ENCODE measurements at regions of chr5 and their contacts with region 1.

Region 1: GRCh38 chr5:55534436-55535198 is at the start of gene PLPP1:
- DNase-seq: peak; percentile 92 to 93
- ATAC-seq: peak; percentile 94 to 97 (median 96)
- H3K4me3 ChIP-seq: peak within 1 kb of the TSS; percentile 58 to 95 (median 88)
- H3K27ac ChIP-seq: peak within 1 kb of the TSS; percentile 78 to 99 (median 96)
- H3K4me1 ChIP-seq: peaks cover 0 to 62% (median 36%) of the 10 kb centered on the region in 9 donors
- H3K27me3 ChIP-seq: peaks cover 0 to 8% (median 0%) of the 10 kb centered on the region in 7 donors
- CTCF ChIP-seq: peak in 2 of 9 donors; percentile 21 to 25
- total RNA-seq, gene PLPP1: 58.7 to 111 (median 75.4) TPM

Region 2: GRCh38 chr5:55429613-55430253 is 104.9 kb before region 1 on chr5:
- intact Hi-C with region 1: loop called in 6 of 10 experiments (anchors 5 to 10 kb)
- DNase-seq: peak in 1 of 2 donors; percentile 23
- ATAC-seq: peak; percentile 12 to 58 (median 24)
- H3K4me3 ChIP-seq: no peak overlapping the region
- H3K27ac ChIP-seq: peak overlapping the region in 1 of 10 donors; percentile 2
- H3K4me1 ChIP-seq: peaks cover 2 to 45% (median 22%) of the 10 kb centered on the region in 9 donors
- H3K27me3 ChIP-seq: no peaks in the 10 kb centered on the region
- CTCF ChIP-seq: no peak

Region 3: DNA sequence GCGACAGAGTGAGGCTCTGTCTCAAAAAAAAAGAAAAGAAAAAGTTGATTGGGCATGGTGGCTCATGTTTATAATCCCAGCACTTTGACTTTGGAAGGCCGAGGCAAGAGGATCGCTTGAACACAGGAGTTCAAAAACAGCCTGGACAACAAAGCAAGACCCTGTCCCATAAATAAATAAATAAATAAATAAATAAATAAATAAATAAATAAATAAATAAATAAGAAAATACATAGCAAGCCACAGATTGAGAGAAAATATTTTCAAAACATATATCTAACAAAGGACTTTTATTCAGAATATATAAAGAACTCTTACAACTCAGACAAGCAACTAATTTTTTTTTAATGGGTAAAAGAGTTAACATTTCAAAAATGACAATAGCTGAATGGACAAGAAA is 71.0 kb before region 1 on chr5:
- intact Hi-C with region 1: loop called in 1 of 10 experiments (anchors 2 kb)
- DNase-seq: no peak
- ATAC-seq: no peak
- H3K4me3 ChIP-seq: no peak overlapping the region
- H3K27ac ChIP-seq: no peak overlapping the region
- H3K4me1 ChIP-seq: peaks cover 3 to 42% (median 26%) of the 10 kb centered on the region in 9 donors
- H3K27me3 ChIP-seq: no peaks in the 10 kb centered on the region
- CTCF ChIP-seq: no peak

Region 4: DNA sequence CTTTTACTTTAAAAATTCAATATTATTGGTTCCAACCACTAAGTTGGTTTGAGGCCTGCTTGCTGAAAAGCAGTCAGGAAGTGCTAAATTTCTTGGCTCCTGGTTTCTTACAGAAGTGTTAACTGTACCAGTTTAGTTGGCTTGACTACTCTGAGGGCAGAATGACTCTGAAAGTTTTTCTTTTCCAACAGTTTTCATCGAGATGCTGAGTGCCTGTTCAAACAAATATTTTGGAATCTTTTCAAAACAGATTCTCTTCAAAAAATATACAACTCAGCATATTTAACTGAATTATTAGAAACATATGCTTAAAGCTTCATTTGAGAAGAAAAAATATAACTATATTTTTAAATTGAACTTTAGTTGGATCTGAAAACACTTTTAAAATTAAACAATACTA is 140.5 kb after region 1 on chr5:
- intact Hi-C with region 1: loop called in 5 of 10 experiments (anchors 5 to 10 kb)
- DNase-seq: no peak
- ATAC-seq: no peak
- H3K4me3 ChIP-seq: no peak overlapping the region
- H3K27ac ChIP-seq: peak overlapping the region in 3 of 10 donors; percentile 16 to 32 (median 28)
- H3K4me1 ChIP-seq: peaks cover 0 to 48% (median 20%) of the 10 kb centered on the region in 9 donors
- H3K27me3 ChIP-seq: no peaks in the 10 kb centered on the region
- CTCF ChIP-seq: no peak

Region 5: DNA sequence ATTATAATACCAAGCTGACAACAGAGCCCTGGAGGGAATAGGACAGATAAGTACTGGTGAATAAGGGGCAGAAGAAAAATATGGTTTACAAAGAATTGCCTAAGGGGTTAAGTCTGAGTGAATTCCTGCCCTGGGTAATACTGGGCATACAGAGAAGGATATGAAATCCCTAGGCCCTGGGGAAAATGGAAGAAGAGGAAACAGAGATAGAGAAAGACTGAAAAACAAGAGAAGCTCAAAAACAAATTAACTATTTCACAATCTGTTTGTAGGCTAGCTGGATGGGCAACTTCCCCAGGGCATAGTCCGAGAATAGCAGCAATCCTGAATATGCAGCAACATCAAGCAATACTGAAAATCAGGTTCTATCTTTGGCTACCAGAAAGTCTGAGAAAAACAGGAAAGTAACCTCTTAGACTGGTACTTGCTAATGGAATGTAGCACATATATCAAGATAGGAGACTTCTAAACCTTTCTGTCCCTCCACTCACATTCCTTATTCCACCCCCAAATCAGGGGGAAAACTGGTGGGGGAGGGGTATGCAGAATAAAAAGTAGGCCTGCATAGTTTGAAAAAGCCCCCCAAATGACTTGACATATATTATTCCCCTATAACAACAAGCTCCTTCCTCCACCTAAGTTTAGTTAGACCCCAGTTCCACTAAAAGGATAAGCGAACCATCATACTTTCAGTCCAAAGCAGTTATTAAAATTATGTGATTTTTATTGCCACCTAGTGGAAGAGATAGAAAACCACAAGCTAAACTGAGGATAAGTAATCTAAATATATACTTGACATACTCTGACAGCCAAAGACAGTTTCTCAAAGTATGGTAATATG is 156.9 kb after region 1 on chr5:
- intact Hi-C with region 1: loop called in 6 of 10 experiments (anchors 5 to 10 kb)
- DNase-seq: no peak
- ATAC-seq: peak; percentile 65 to 86 (median 73)
- H3K4me3 ChIP-seq: peak overlapping the region in 3 of 10 donors; percentile 11 to 19 (median 19)
- H3K27ac ChIP-seq: peak overlapping the region in 6 of 10 donors; percentile 5 to 52 (median 30)
- H3K4me1 ChIP-seq: peaks cover 6 to 34% (median 21%) of the 10 kb centered on the region in 9 donors
- H3K27me3 ChIP-seq: no peaks in the 10 kb centered on the region
- CTCF ChIP-seq: peak; percentile 42 to 83 (median 72)